ENCODE measurements at regions of chrX and their contacts with region 1.

Region 1: DNA sequence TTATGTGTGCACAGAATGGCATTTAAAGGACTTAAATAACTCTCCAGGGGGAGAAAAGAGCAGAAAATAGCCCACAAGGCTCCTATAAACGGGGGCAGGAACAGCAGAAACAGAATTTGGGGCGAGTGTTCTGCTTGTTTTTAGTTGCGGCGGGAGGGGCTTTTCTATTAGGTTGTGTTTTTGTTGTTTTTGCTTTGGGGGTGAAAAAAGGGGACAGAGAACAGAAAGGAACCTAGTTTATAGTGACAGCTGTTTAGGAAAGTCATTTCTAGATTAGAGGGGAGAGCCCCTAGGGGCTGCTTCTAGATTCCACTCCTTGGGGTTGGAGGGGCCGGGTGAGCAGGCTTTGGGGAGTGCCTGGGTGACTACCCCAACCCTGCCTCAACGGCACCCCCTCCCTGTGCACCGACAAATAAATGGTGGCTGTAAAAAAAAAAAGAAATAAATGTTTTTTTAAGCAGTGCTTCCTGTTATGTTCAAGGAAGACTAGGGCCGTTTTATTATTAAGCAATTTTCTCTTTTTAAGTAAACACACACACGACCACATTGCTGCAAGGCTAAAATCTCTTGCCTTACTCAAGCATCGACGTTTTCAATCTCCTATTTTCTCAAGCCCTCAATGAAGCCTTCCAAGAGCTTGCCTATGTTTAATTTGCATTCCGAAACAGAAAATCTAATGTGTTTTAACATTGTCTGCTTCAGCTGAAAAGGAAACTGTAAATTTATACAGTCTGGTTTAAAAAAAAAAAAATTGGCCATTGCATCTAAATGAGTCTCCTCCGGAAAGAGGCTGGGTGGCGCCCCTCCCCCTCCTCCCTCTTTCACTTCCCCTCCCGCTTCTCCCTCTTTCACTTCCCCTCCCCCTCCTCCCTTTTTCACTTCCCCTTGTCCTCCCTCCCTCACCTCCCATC is 123.3 kb upstream of the TBL1X start:
- DNase-seq: peak; percentile 49
- H3K4me3 Mint-ChIP-seq: peak overlapping the region; percentile 58
- H3K27ac Mint-ChIP-seq: peak overlapping the region; percentile 90
- H3K4me1 Mint-ChIP-seq: peaks cover 34% of the 10 kb centered on the region
- H3K27me3 Mint-ChIP-seq: no peaks in the 10 kb centered on the region

Region 2: DNA sequence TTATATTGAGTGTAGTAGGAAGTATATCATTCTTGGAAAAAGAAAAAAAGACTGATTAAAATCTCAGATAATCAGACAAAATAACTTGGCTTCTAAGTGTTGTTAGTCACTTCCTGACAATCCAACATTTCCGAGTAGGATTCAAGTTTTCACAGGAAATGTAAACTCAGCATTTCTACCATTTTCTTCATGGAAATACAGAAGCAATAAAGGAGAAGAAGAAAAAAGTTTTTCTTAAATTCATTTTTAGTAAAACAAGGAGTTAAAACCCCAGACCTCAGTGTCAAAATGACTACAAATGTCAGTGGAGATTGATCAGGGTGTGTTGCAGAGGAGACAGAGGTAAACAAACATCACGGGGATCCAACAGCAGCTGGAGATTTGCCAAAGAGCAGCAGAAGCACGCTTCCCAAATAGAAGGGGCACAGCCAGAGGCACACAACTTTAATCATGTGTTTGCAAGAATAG is 178.3 kb before region 1 on chrX:
- intact Hi-C with region 1: loop called (anchors 1 kb)
- DNase-seq: no peak
- H3K4me3 Mint-ChIP-seq: peak overlapping the region; percentile 8
- H3K27ac Mint-ChIP-seq: peak overlapping the region; percentile 81
- H3K4me1 Mint-ChIP-seq: peaks cover 55% of the 10 kb centered on the region
- H3K27me3 Mint-ChIP-seq: no peaks in the 10 kb centered on the region

Region 3: DNA sequence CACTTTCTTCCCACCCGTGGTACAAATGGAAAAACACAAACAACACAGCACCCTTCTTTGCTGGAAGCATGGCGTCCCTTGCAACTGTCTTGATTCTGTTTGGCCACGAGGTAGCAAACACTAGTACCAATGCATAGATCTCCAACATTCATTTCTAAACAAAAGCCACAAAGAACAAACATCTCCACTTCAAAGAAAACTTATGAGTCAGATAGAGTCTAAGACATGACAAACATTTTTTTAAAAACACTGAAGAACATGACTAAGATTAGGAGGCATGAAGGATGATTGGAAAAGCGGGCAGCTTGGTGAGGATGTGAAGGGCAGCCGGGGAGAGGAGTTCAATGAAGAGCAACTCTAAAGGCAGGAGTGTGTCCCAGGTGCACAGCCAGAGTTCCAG is 110.1 kb before region 1 on chrX:
- intact Hi-C with region 1: loop called (anchors 5 kb)
- DNase-seq: no peak
- H3K4me3 Mint-ChIP-seq: no peak overlapping the region
- H3K27ac Mint-ChIP-seq: no peak overlapping the region
- H3K4me1 Mint-ChIP-seq: peaks cover 10% of the 10 kb centered on the region
- H3K27me3 Mint-ChIP-seq: peaks cover 2% of the 10 kb centered on the region

Region 4: DNA sequence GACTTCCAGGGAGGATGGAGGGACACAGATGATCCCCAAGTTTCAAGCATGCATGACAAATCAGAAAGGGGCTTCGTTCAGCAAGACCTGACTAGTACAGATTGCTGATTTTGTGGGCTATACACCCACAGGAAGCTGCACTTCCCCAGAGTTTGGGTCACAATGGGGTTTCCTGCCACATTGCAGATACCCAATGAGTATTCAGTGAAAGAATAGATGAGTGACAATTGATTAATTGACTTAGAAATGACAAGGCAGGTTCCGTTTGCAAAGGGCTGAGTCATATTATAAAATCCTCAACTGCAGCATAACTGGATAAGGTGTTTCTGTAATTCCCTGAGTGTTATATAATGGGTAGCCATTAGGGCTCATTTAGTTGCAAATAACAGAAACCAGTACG is 23.3 kb before region 1 on chrX:
- intact Hi-C with region 1: loop called (anchors 2 kb)
- DNase-seq: peak; percentile 24
- H3K4me3 Mint-ChIP-seq: no peak overlapping the region
- H3K27ac Mint-ChIP-seq: no peak overlapping the region
- H3K4me1 Mint-ChIP-seq: peaks cover 21% of the 10 kb centered on the region
- H3K27me3 Mint-ChIP-seq: no peaks in the 10 kb centered on the region

Region 5: GRCh38 chrX:9352694-9353411 is 11.3 kb after region 1 on chrX:
- intact Hi-C with region 1: loop called (anchors 1 kb)
- DNase-seq: peak; percentile 56
- H3K4me3 Mint-ChIP-seq: peak overlapping the region; percentile 56
- H3K27ac Mint-ChIP-seq: peak overlapping the region; percentile 82
- H3K4me1 Mint-ChIP-seq: peaks cover 39% of the 10 kb centered on the region
- H3K27me3 Mint-ChIP-seq: no peaks in the 10 kb centered on the region

Region 6: DNA sequence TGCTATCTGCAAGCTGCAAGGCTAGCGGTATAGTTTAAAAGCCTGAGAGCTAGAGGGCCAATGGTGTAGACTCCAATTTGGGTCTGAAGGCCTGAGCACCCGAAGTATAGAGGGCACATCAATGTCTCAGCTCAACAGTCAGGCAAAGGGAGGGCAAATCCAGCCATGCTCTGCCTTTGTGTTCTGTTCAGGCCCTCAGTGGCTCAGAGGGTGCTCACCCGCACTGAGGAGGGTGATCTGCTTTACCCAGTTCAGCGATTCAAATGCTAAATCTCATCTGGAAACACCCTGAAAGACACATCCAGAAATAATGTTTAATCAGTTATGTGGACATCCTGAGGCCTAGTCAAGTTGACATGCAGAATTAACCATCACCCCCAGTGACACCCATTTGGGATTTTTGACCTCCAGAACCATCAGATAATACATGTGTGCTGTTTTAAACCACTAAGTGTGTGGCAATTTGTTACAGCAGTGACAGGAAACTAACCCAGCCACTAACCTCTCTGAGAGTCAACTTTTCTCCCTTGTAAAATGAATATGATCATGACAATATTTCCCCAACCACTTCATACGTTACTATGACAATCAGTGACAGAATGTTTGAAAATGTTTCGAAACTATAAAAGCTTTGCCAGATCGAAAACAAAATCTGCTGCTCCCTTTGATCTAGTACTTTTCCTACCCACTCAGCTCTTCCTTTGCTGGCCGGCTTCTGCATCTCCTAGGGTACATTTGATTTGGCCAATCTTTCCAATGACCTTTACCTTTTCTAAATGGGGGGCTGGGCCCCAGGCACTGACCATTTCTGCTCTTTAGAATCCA is 114.9 kb after region 1 on chrX:
- intact Hi-C with region 1: loop called (anchors 1 kb)
- DNase-seq: peak; percentile 27
- H3K4me3 Mint-ChIP-seq: no peak overlapping the region
- H3K27ac Mint-ChIP-seq: peak overlapping the region; percentile 90
- H3K4me1 Mint-ChIP-seq: peaks cover 28% of the 10 kb centered on the region
- H3K27me3 Mint-ChIP-seq: no peaks in the 10 kb centered on the region